Mammary epithelial cell (primary cell): ENCODE measurements at regions of chr19 and their contacts with region 1.

Region 1: DNA sequence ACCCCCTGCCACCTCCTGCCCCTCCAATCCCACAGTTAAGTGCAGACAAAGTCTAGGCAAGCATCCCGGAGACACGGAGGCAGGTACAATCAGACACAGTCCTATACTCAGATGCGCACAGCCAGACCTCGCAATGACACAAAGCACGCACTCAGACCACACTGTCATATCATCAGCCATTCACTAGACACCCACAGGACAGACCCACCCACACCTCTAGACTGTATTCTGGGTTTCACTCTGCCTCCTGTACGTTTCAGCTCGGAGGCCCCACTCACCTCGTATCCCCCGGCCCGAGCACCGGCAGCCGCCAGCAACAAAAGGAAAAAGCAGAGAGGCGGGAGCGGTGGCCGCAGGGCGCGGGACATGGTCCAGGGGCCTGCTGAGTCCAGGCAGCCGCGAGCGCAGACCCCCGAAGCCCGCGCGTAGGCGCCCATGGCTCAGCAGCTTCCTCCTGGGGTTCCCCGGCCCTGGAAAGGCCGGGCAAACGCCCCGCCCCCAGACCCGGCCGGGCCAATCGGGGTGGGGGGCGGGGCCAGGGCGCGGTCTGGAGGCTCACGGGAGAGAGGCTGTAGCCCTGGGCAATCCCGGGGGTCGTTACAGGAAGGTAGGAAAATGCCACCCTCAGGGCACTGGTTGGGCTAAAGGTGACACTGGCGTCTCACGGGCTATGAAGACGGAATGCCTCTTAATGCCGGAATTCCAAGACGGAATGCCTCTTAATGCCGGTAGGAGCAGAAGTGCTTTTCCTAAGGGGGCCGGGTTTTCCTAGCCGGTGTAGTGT is at the starts of genes MAN2B1 and WDR83:
- DNase-seq: peak; percentile 73
- H3K4me3 ChIP-seq: peak within 1 kb of the TSS; percentile 61 to 87 (median 73)
- H3K27ac ChIP-seq: peak within 1 kb of the TSS; percentile 56
- H3K4me1 ChIP-seq: peaks cover 34% of the 10 kb centered on the region
- H3K27me3 ChIP-seq: no peaks in the 10 kb centered on the region
- CTCF ChIP-seq: no peak
- total RNA-seq, gene MAN2B1: 36.3 to 57.2 TPM
- total RNA-seq, gene WDR83: 6.7 to 8.1 TPM

Region 2: GRCh38 chr19:11887611-11888531 is 778.6 kb before region 1 on chr19 and contains the start of gene ZNF69:
- CTCF ChIA-PET with region 1: no interaction called
- dilution Hi-C with region 1: no loop called
- in situ Hi-C with region 1: no loop called
- intact Hi-C with region 1: loop called (anchors 1 kb)
- DNase-seq: peak; percentile 55
- H3K4me3 ChIP-seq: peak within 1 kb of the TSS; percentile 24 to 51 (median 39)
- H3K27ac ChIP-seq: no peak within 1 kb of the TSS
- H3K4me1 ChIP-seq: peaks cover 5% of the 10 kb centered on the region
- H3K27me3 ChIP-seq: no peaks in the 10 kb centered on the region
- CTCF ChIP-seq: peak in 1 of 2 donors; percentile 18
- total RNA-seq, gene ZNF69: 3.4 to 8.5 TPM

Region 3: GRCh38 chr19:12055783-12056182 is 610.7 kb before region 1 on chr19:
- CTCF ChIA-PET with region 1: interaction called, 3 read pairs
- dilution Hi-C with region 1: no loop called
- in situ Hi-C with region 1: no loop called
- intact Hi-C with region 1: loop called (anchors 5 kb)
- DNase-seq: no peak
- H3K4me3 ChIP-seq: no peak overlapping the region
- H3K27ac ChIP-seq: no peak overlapping the region
- H3K4me1 ChIP-seq: peaks cover 4% of the 10 kb centered on the region
- H3K27me3 ChIP-seq: peaks cover 2% of the 10 kb centered on the region
- CTCF ChIP-seq: no peak

Region 4: DNA sequence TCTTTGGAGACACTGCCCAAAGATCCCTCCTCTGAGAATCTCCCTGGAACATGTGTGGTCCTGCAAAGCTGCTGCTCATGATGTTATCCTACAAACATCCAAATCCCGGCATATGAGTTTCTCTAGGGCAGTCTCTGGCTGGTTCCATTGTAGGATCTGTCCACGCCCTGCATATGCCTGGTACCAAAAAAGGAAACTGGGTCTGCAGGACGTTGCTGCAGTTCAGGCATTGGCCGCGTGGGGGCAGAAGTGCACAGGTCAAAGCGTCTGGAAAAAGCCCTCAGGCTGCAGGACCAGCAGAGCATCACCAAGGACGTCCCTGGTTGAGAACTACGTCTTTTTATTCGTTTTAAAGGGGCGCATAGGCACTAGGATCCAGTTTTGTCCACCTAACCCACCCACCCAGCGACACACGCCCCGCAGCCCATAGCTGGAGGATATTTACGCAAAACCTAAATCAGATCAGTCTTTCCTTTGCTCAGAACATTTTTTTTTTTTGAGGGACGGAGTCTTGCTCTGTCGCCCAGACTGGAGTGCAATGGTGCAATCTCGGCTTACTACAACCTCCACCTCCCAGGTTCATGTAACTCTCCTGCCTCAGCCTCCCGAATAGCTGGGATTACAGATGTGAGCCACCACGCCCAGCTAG is 102.3 kb before region 1 on chr19:
- CTCF ChIA-PET with region 1: interaction called, 3 read pairs
- dilution Hi-C with region 1: no loop called
- in situ Hi-C with region 1: loop called (anchors 10 kb)
- intact Hi-C with region 1: loop called (anchors 1 kb)
- DNase-seq: peak; percentile 88
- H3K4me3 ChIP-seq: no peak overlapping the region
- H3K27ac ChIP-seq: no peak overlapping the region
- H3K4me1 ChIP-seq: no peaks in the 10 kb centered on the region
- H3K27me3 ChIP-seq: no peaks in the 10 kb centered on the region
- CTCF ChIP-seq: peak; percentile 96 to 97

Region 5: GRCh38 chr19:12610540-12611360 is 55.7 kb before region 1 on chr19 and contains the starts of genes ZNF490 and ZNF791:
- CTCF ChIA-PET with region 1: no interaction called
- dilution Hi-C with region 1: no loop called
- in situ Hi-C with region 1: no loop called
- intact Hi-C with region 1: loop called (anchors 5 kb)
- DNase-seq: peak; percentile 95
- H3K4me3 ChIP-seq: peak within 1 kb of the TSS; percentile 86 to 91 (median 87)
- H3K27ac ChIP-seq: peak within 1 kb of the TSS; percentile 91
- H3K4me1 ChIP-seq: no peaks in the 10 kb centered on the region
- H3K27me3 ChIP-seq: no peaks in the 10 kb centered on the region
- CTCF ChIP-seq: peak in 1 of 2 donors; percentile 13
- total RNA-seq, gene ZNF490: 6.5 to 8.3 TPM
- total RNA-seq, gene ZNF791: 15.3 to 18.6 TPM